ENCODE measurements at regions of chr20 and their contacts with region 1.

Region 1: GRCh38 chr20:49594143-49594930 is 26.4 kb upstream of the PTGIS start:
- DNase-seq: peak; percentile 77
- H3K4me3 Mint-ChIP-seq: peak overlapping the region; percentile 90
- H3K27ac Mint-ChIP-seq: peak overlapping the region; percentile 100
- H3K4me1 Mint-ChIP-seq: peaks cover 78% of the 10 kb centered on the region
- H3K27me3 Mint-ChIP-seq: no peaks in the 10 kb centered on the region

Region 2: GRCh38 chr20:48667481-48668413 is 926.6 kb before region 1 on chr20:
- intact Hi-C with region 1: no loop called
- DNase-seq: no peak
- H3K4me3 Mint-ChIP-seq: no peak overlapping the region
- H3K27ac Mint-ChIP-seq: no peak overlapping the region
- H3K4me1 Mint-ChIP-seq: no peaks in the 10 kb centered on the region
- H3K27me3 Mint-ChIP-seq: no peaks in the 10 kb centered on the region

Region 3: GRCh38 chr20:49278036-49278817 is 316.1 kb before region 1 on chr20 and contains the start of gene ZNFX1:
- intact Hi-C with region 1: loop called (anchors 1 kb)
- DNase-seq: peak; percentile 98
- H3K4me3 Mint-ChIP-seq: peak within 1 kb of the TSS; percentile 99
- H3K27ac Mint-ChIP-seq: peak within 1 kb of the TSS; percentile 99
- H3K4me1 Mint-ChIP-seq: peaks cover 50% of the 10 kb centered on the region
- H3K27me3 Mint-ChIP-seq: no peaks in the 10 kb centered on the region
- total RNA-seq, gene ZNFX1: 49.3 and 51.0 TPM in 2 replicates

Region 4: DNA sequence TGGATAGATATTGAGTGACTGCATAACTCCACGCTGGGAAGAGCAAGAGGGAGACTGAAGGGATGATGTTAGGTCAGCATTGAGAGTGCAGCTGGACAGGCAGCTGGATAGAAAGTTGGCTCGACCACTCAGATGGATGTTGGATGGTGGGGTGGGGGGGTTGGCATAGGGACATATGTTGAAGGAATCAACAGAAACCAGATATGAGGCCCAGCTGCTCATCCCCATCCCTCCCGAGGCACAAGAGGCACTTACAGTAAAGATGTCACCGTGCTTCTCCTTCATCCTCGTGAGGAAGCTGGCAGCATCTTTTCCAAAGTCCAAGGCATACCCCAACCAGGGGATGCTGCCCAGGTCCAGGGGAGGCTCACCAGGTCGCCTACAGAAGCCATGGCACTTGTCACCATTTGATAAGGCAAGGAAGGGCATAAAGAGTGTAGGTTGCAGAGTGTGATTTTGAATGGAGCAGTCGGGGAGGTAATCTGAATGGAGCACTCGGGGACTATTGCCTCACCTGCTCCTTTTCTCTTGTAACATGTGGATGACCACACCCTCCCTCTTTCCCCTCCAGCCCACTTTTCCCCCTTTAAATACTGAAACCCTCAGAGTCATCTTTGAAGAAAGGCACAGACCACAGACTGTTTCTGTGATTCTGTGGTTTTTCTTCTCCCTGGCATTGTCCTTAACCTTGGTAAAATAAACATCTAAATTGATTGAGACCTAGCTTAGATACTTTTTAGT is 44.4 kb before region 1 on chr20:
- intact Hi-C with region 1: loop called (anchors 1 kb)
- DNase-seq: no peak
- H3K4me3 Mint-ChIP-seq: no peak overlapping the region
- H3K27ac Mint-ChIP-seq: peak overlapping the region; percentile 67
- H3K4me1 Mint-ChIP-seq: peaks cover 4% of the 10 kb centered on the region
- H3K27me3 Mint-ChIP-seq: no peaks in the 10 kb centered on the region

Region 5: GRCh38 chr20:49804364-49804763 is 210.0 kb after region 1 on chr20:
- intact Hi-C with region 1: loop called (anchors 2 kb)
- DNase-seq: no peak
- H3K4me3 Mint-ChIP-seq: no peak overlapping the region
- H3K27ac Mint-ChIP-seq: peak overlapping the region; percentile 82
- H3K4me1 Mint-ChIP-seq: peaks cover 65% of the 10 kb centered on the region
- H3K27me3 Mint-ChIP-seq: no peaks in the 10 kb centered on the region

Region 6: GRCh38 chr20:50115591-50116372 is 521.4 kb after region 1 on chr20:
- intact Hi-C with region 1: loop called (anchors 5 kb)
- DNase-seq: peak; percentile 86
- H3K4me3 Mint-ChIP-seq: peak overlapping the region; percentile 85
- H3K27ac Mint-ChIP-seq: peak overlapping the region; percentile 95
- H3K4me1 Mint-ChIP-seq: peaks cover 43% of the 10 kb centered on the region
- H3K27me3 Mint-ChIP-seq: no peaks in the 10 kb centered on the region

Measured in activated T-helper 2 cell treated with anti-CD3 and anti-CD28 coated beads, Interferon-gamma antibody, Interleukin-2, Interleukin-4, amounts not matched to agents 10 μg/mL and 5 μg/mL and 100 μg/mL, durations not matched to agents 14 hours and 24 hours and 36 hours (primary cell).